Mammary epithelial cell (primary cell): ENCODE measurements at regions of chr3 and their contacts with region 1.

Region 1: GRCh38 chr3:154235330-154235729 is 89.0 kb downstream of the DHX36 start:
- DNase-seq: peak; percentile 30
- H3K4me3 ChIP-seq: no peak overlapping the region
- H3K27ac ChIP-seq: no peak overlapping the region
- H3K4me1 ChIP-seq: no peaks in the 10 kb centered on the region
- H3K27me3 ChIP-seq: no peaks in the 10 kb centered on the region
- CTCF ChIP-seq: no peak

Region 2: DNA sequence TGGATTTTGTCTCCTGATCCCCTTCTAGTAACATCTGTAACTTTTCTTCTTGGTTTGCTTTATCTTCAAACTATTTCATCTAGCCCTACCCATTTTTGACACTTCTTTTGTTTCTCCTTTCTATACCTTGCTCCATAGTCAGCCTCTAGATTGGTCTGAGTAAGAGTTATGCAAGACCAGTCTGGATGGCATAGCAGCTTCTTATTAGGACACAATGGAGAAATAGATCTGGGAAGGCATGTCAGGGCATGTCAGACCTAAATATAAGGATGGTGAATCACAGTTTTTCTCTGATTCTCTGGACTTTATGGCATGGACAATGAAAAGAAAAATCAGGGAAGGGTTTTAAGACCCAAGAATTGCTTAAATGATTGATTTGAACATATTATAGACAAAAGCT is 620.8 kb before region 1 on chr3:
- CTCF ChIA-PET with region 1: no interaction called
- dilution Hi-C with region 1: no loop called
- in situ Hi-C with region 1: no loop called
- intact Hi-C with region 1: loop called (anchors 5 kb)
- DNase-seq: peak; percentile 95
- H3K4me3 ChIP-seq: no peak overlapping the region
- H3K27ac ChIP-seq: peak overlapping the region; percentile 66
- H3K4me1 ChIP-seq: peaks cover 13% of the 10 kb centered on the region
- H3K27me3 ChIP-seq: no peaks in the 10 kb centered on the region
- CTCF ChIP-seq: no peak

Region 3: DNA sequence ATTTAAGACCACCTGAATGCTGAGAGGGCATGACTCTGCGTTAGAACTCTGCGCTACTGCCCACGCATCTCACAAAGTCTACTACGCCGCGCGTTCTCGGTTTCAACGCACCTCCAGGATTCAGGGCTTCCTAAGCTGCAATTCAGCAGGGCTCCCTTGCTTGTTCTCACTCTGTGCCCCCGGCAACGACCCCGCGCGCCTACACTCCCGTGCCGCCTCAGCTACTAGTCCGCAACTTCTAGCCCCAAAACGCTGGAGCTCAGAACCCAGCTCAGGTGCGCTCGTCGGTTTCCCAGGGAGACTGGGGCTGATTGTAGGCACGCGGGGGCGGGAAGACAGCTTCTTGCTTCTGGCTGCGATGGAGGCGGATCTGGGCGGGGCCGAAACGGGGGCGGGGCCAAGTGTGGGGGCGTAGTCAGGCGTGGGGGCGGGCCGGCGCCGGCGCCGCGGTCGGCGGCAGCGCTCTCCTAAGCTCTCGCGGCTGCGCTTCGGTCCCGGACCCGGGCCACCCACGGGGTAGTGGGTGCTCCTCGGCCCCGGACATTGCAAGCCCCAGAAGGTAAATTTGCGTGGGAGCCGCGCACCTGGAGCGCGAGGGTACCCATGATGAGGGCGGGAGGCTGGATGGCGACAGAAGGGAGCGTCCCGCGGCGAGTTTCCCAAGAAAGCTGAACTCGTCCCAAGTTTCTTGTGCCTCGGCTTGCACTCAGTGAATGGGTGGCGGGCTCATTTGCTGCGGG is 114.2 kb before region 1 on chr3 and contains the start of gene ARHGEF26:
- CTCF ChIA-PET with region 1: no interaction called
- dilution Hi-C with region 1: no loop called
- in situ Hi-C with region 1: no loop called
- intact Hi-C with region 1: loop called (anchors 5 kb)
- DNase-seq: peak; percentile 83
- H3K4me3 ChIP-seq: peak within 1 kb of the TSS; percentile 66 to 85 (median 77)
- H3K27ac ChIP-seq: peak within 1 kb of the TSS; percentile 46
- H3K4me1 ChIP-seq: peaks cover 26% of the 10 kb centered on the region
- H3K27me3 ChIP-seq: no peaks in the 10 kb centered on the region
- CTCF ChIP-seq: no peak
- total RNA-seq, gene ARHGEF26: 2.7 to 12.2 TPM